B cell (primary cell): ENCODE measurements at regions of chr12 and their contacts with region 1.

Region 1: GRCh38 chr12:90978117-90978770 is 23.3 kb upstream of the CCER1 start:
- DNase-seq: peak; percentile 15
- ATAC-seq: no peak
- H3K4me3 ChIP-seq: no peak overlapping the region
- H3K4me3 Mint-ChIP-seq: no peak overlapping the region
- H3K27ac ChIP-seq: no peak overlapping the region
- H3K27ac Mint-ChIP-seq: no peak overlapping the region
- H3K4me1 ChIP-seq: no peaks in the 10 kb centered on the region
- H3K4me1 Mint-ChIP-seq: no peaks in the 10 kb centered on the region
- H3K27me3 ChIP-seq: no peaks in the 10 kb centered on the region
- H3K27me3 Mint-ChIP-seq: peaks cover 4% of the 10 kb centered on the region
- CTCF ChIP-seq: peak; percentile 44

Region 2: GRCh38 chr12:91326058-91327027 is 348.1 kb after region 1 on chr12:
- CTCF ChIA-PET with region 1: interaction called, 3 read pairs
- POLR2A ChIA-PET with region 1: no interaction called
- intact Hi-C with region 1: loop called (anchors 2 kb)
- DNase-seq: peak; percentile 50
- ATAC-seq: no peak
- H3K4me3 ChIP-seq: no peak overlapping the region
- H3K4me3 Mint-ChIP-seq: no peak overlapping the region
- H3K27ac ChIP-seq: no peak overlapping the region
- H3K27ac Mint-ChIP-seq: no peak overlapping the region
- H3K4me1 ChIP-seq: no peaks in the 10 kb centered on the region
- H3K4me1 Mint-ChIP-seq: no peaks in the 10 kb centered on the region
- H3K27me3 ChIP-seq: no peaks in the 10 kb centered on the region
- H3K27me3 Mint-ChIP-seq: peaks cover 4% of the 10 kb centered on the region
- CTCF ChIP-seq: peak; percentile 93